Gastrocnemius medialis (tissue), 4 donors: ENCODE measurements at regions of chr7 and their contacts with region 1.

Region 1: GRCh38 chr7:150778738-150779301 is 21.3 kb downstream of the TMEM176B start:
- DNase-seq: peak in 1 of 2 donors; percentile 49
- ATAC-seq: peak; percentile 67 to 71
- H3K4me3 ChIP-seq: no peak overlapping the region
- H3K27ac ChIP-seq: no peak overlapping the region
- H3K4me1 ChIP-seq: no peaks in the 10 kb centered on the region
- H3K27me3 ChIP-seq: no peaks in the 10 kb centered on the region
- CTCF ChIP-seq: peak; percentile 31 to 76 (median 49)
- POLR2A ChIP-seq: no peak

Region 2: GRCh38 chr7:150801242-150801938 is 22.6 kb after region 1 on chr7:
- in situ Hi-C with region 1: no loop called
- intact Hi-C with region 1: no loop called
- DNase-seq: no peak
- ATAC-seq: no peak
- H3K4me3 ChIP-seq: peak overlapping the region in 3 of 4 donors; percentile 43 to 52 (median 43)
- H3K27ac ChIP-seq: no peak overlapping the region
- H3K4me1 ChIP-seq: no peaks in the 10 kb centered on the region
- H3K27me3 ChIP-seq: peaks cover 18 to 40% (median 25%) of the 10 kb centered on the region in 3 donors
- CTCF ChIP-seq: no peak
- POLR2A ChIP-seq: no peak

Region 3: GRCh38 chr7:150876817-150877526 is 98.2 kb after region 1 on chr7:
- in situ Hi-C with region 1: loop called in 1 of 4 experiments (anchors 5 kb)
- intact Hi-C with region 1: no loop called
- DNase-seq: no peak
- ATAC-seq: peak in 1 of 2 donors; percentile 36
- H3K4me3 ChIP-seq: no peak overlapping the region
- H3K27ac ChIP-seq: no peak overlapping the region
- H3K4me1 ChIP-seq: no peaks in the 10 kb centered on the region
- H3K27me3 ChIP-seq: peaks cover 0 to 2% (median 0%) of the 10 kb centered on the region in 3 donors
- CTCF ChIP-seq: peak in 3 of 5 experiments; percentile 8 to 26 (median 11)
- POLR2A ChIP-seq: no peak

Region 4: DNA sequence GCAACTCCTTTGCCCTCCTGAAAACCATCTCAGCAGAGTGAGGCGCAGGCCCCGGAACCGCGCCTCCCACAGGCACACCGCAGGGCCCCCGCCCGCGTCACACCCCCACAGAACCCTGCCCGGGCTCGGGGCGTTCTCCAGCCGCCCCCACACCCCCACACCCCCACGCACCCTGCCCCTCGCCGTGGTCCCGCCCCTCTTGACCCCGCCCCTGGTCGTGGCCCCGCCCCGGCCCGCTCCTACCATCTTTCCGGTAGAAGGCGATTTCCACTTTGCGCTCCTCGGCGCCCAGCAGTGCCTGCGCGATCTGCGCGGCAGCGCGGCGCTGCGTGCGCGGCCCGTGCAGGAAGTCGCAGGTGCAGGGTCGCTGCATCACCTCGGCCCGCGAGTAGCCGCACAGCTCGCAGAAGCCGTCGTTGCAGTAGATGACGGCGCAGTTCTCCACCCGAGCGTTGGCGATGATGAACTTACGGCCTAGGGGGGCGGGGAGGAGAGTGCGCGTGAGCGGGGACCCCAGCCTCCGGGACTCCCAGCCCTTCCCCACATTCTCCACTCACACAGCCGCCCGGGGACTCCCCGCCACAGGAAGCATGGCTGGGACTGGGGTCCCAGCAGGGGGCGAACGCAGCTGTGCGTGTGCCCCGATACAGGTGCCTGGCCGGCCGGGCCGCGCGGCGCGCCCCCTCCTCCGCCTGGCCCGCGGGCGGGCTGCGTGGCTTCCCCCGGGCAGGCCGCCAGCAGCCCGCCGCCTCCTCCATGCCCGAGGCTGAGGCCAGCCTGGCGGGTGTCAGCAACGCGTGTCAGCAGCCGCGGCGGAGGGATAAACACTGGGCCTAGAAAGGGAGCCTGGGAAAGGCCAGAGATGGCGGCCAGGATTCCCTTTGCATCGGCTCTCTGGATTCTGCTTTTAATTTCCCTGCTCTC is 195.9 kb after region 1 on chr7:
- in situ Hi-C with region 1: loop called in 3 of 4 experiments (anchors 25 kb)
- intact Hi-C with region 1: no loop called
- DNase-seq: no peak
- ATAC-seq: no peak
- H3K4me3 ChIP-seq: peak overlapping the region; percentile 24 to 40 (median 29)
- H3K27ac ChIP-seq: no peak overlapping the region
- H3K4me1 ChIP-seq: peaks cover 6 to 26% of the 10 kb centered on the region in 2 donors
- H3K27me3 ChIP-seq: peaks cover 49 to 71% (median 56%) of the 10 kb centered on the region in 3 donors
- CTCF ChIP-seq: peak in 1 of 5 experiments; percentile 16
- POLR2A ChIP-seq: no peak